ENCODE measurements at regions of chr20 and their contacts with region 1.

Region 1: GRCh38 chr20:62368976-62369814 is 2.1 kb upstream of the LAMA5 start:
- DNase-seq: peak; percentile 66
- ATAC-seq: peak; percentile 30
- H3K4me3 ChIP-seq: peak overlapping the region; percentile 65 to 95 (median 91)
- H3K27ac ChIP-seq: peak overlapping the region; percentile 95
- H3K4me1 ChIP-seq: peaks cover 75% of the 10 kb centered on the region
- H3K27me3 ChIP-seq: no peaks in the 10 kb centered on the region
- CTCF ChIP-seq: peak; percentile 65
- EP300 ChIP-seq: no peak; a peak in 1 of 4 replicates
- POLR2A ChIP-seq: 0 out of 4 replicates have a peak, but pooled peaks of 1 of the 2 experiments have one; percentile 6
- RAD21 ChIP-seq: peak; percentile 5; the same call in 1 of the 2 replicates

Region 2: GRCh38 chr20:62302341-62303058 is 66.7 kb before region 1 on chr20 and contains the start of gene ADRM1:
- CTCF ChIA-PET with region 1: interaction called, 73 read pairs
- POLR2A ChIA-PET with region 1: interaction called, 187 read pairs
- in situ Hi-C with region 1: loop called (anchors 5 kb)
- intact Hi-C with region 1: no loop called
- DNase-seq: peak; percentile 97
- ATAC-seq: peak; percentile 73
- H3K4me3 ChIP-seq: peak within 1 kb of the TSS; percentile 74 to 98 (median 93)
- H3K27ac ChIP-seq: peak within 1 kb of the TSS; percentile 97
- H3K4me1 ChIP-seq: peaks cover 50% of the 10 kb centered on the region
- H3K27me3 ChIP-seq: no peaks in the 10 kb centered on the region; a peak in 1 of 5 replicates
- CTCF ChIP-seq: peak; percentile 98
- EP300 ChIP-seq: peak; percentile 80 to 96; a peak in 3 of 4 replicates
- POLR2A ChIP-seq: peak in 1 of 2 experiments; percentile 70; a peak in 3 of 4 replicates
- RAD21 ChIP-seq: peak; percentile 94
- total RNA-seq, gene ADRM1: 143 and 154 TPM in 2 replicates

Region 3: GRCh38 chr20:62350093-62350628 is 19.0 kb before region 1 on chr20:
- CTCF ChIA-PET with region 1: no interaction called
- POLR2A ChIA-PET with region 1: interaction called, 78 read pairs
- in situ Hi-C with region 1: no loop called
- intact Hi-C with region 1: loop called (anchors 2 kb)
- DNase-seq: no peak
- ATAC-seq: peak; percentile 5
- H3K4me3 ChIP-seq: no peak overlapping the region
- H3K27ac ChIP-seq: peak overlapping the region; percentile 6
- H3K4me1 ChIP-seq: peaks cover 36% of the 10 kb centered on the region
- H3K27me3 ChIP-seq: no peaks in the 10 kb centered on the region
- CTCF ChIP-seq: no peak
- EP300 ChIP-seq: no peak
- POLR2A ChIP-seq: no peak
- RAD21 ChIP-seq: 0 out of 2 replicates have a peak, but pooled peaks have one; percentile 12

Region 4: GRCh38 chr20:62357187-62357667 is 12.0 kb before region 1 on chr20:
- CTCF ChIA-PET with region 1: no interaction called
- POLR2A ChIA-PET with region 1: interaction called, 95 read pairs
- in situ Hi-C with region 1: no loop called
- intact Hi-C with region 1: loop called (anchors 2 kb)
- DNase-seq: no peak
- ATAC-seq: no peak
- H3K4me3 ChIP-seq: no peak overlapping the region
- H3K27ac ChIP-seq: no peak overlapping the region
- H3K4me1 ChIP-seq: peaks cover 56% of the 10 kb centered on the region
- H3K27me3 ChIP-seq: no peaks in the 10 kb centered on the region
- CTCF ChIP-seq: no peak
- EP300 ChIP-seq: no peak
- POLR2A ChIP-seq: no peak
- RAD21 ChIP-seq: no peak

Region 5: GRCh38 chr20:62386383-62387218 is 17.4 kb after region 1 on chr20 and contains the start of gene RPS21:
- CTCF ChIA-PET with region 1: no interaction called
- POLR2A ChIA-PET with region 1: interaction called, 73 read pairs
- in situ Hi-C with region 1: no loop called
- intact Hi-C with region 1: no loop called
- DNase-seq: peak; percentile 92
- ATAC-seq: peak; percentile 84
- H3K4me3 ChIP-seq: peak within 1 kb of the TSS; percentile 97 to 99 (median 99)
- H3K27ac ChIP-seq: peak within 1 kb of the TSS; percentile 66
- H3K4me1 ChIP-seq: peaks cover 36% of the 10 kb centered on the region
- H3K27me3 ChIP-seq: no peaks in the 10 kb centered on the region; a peak in 2 of 5 replicates
- CTCF ChIP-seq: peak; percentile 43; the same call in 1 of the 2 replicates
- EP300 ChIP-seq: peak; percentile 24 to 28; a peak in 1 of 4 replicates
- POLR2A ChIP-seq: peak; percentile 92 to 94
- RAD21 ChIP-seq: peak; percentile 68
- total RNA-seq, gene RPS21: 2,584 and 2,647 TPM in 2 replicates

Region 6: GRCh38 chr20:63973636-63974402 is 1604.6 kb after region 1 on chr20:
- CTCF ChIA-PET with region 1: no interaction called
- POLR2A ChIA-PET with region 1: no interaction called
- in situ Hi-C with region 1: no loop called
- intact Hi-C with region 1: loop called (anchors 10 kb)
- DNase-seq: peak; percentile 86
- ATAC-seq: peak; percentile 74
- H3K4me3 ChIP-seq: peak overlapping the region; percentile 43 to 75 (median 61); a peak in 5 of 6 replicates
- H3K27ac ChIP-seq: peak overlapping the region; percentile 13
- H3K4me1 ChIP-seq: peaks cover 54% of the 10 kb centered on the region
- H3K27me3 ChIP-seq: no peaks in the 10 kb centered on the region
- CTCF ChIP-seq: peak; percentile 100
- EP300 ChIP-seq: peak in 1 of 2 experiments; percentile 52; a peak in 1 of 4 replicates
- POLR2A ChIP-seq: no peak; a peak in 2 of 4 replicates
- RAD21 ChIP-seq: peak; percentile 99